ENCODE measurements at regions of chr16 and their contacts with region 1.

Region 1: GRCh38 chr16:74862741-74863244 is 88.2 kb upstream of the FA2H start:
- DNase-seq: no peak
- ATAC-seq: peak; percentile 27; the same call in 1 of the 2 replicates
- H3K4me3 Mint-ChIP-seq: no peak overlapping the region
- H3K27ac Mint-ChIP-seq: peak overlapping the region; percentile 77; the same call in 1 of the 2 replicates
- H3K4me1 Mint-ChIP-seq: peaks cover 43% of the 10 kb centered on the region
- H3K27me3 Mint-ChIP-seq: no peaks in the 10 kb centered on the region
- CTCF ChIP-seq: peak; percentile 70

Region 2: GRCh38 chr16:74709441-74709877 is 153.3 kb before region 1 on chr16:
- CTCF ChIA-PET with region 1: interaction called, 62 read pairs
- POLR2A ChIA-PET with region 1: interaction called, 7 read pairs
- DNase-seq: peak; percentile 87
- ATAC-seq: peak; percentile 89
- H3K4me3 Mint-ChIP-seq: no peak overlapping the region
- H3K27ac Mint-ChIP-seq: no peak overlapping the region
- H3K4me1 Mint-ChIP-seq: peaks cover 8% of the 10 kb centered on the region
- H3K27me3 Mint-ChIP-seq: no peaks in the 10 kb centered on the region
- CTCF ChIP-seq: peak; percentile 90

Region 3: GRCh38 chr16:74738134-74738541 is 124.7 kb before region 1 on chr16:
- CTCF ChIA-PET with region 1: interaction called, 11 read pairs
- POLR2A ChIA-PET with region 1: interaction called, 3 read pairs
- DNase-seq: no peak
- ATAC-seq: no peak
- H3K4me3 Mint-ChIP-seq: no peak overlapping the region
- H3K27ac Mint-ChIP-seq: no peak overlapping the region
- H3K4me1 Mint-ChIP-seq: peaks cover 49% of the 10 kb centered on the region
- H3K27me3 Mint-ChIP-seq: no peaks in the 10 kb centered on the region
- CTCF ChIP-seq: no peak

Region 4: GRCh38 chr16:74774203-74775116 is 88.3 kb before region 1 on chr16 and contains the start of gene FA2H:
- CTCF ChIA-PET with region 1: interaction called, 31 read pairs
- POLR2A ChIA-PET with region 1: no interaction called
- DNase-seq: peak; percentile 88
- ATAC-seq: peak; percentile 94
- H3K4me3 Mint-ChIP-seq: peak within 1 kb of the TSS; percentile 84
- H3K27ac Mint-ChIP-seq: peak within 1 kb of the TSS; percentile 80; the same call in 1 of the 2 replicates
- H3K4me1 Mint-ChIP-seq: peaks cover 16% of the 10 kb centered on the region
- H3K27me3 Mint-ChIP-seq: peaks cover 31% of the 10 kb centered on the region
- CTCF ChIP-seq: no peak
- total RNA-seq, gene FA2H: 6.0 to 10.9 TPM (median 6.6 TPM) in 3 replicates

Region 5: DNA sequence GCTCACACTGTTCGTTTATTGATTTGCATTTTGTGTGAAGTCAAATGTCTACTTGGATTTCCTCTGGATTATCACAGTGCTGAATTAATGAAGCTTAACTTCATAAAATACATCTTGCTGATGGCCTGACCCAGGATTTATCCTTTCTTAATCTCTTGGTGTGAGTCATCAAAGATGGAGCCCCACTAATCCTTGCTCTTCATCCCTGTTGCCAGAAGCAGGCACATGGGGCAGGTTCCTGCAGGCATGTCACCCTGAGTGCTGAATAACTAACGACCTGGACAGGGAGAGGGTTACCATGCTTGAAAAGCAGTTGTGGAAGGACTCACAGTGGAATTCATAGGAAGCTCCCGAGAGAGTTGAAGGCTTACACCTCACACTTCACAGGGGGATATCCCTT is 32.1 kb before region 1 on chr16:
- CTCF ChIA-PET with region 1: interaction called, 22 read pairs
- POLR2A ChIA-PET with region 1: no interaction called
- DNase-seq: no peak
- ATAC-seq: no peak
- H3K4me3 Mint-ChIP-seq: no peak overlapping the region
- H3K27ac Mint-ChIP-seq: no peak overlapping the region
- H3K4me1 Mint-ChIP-seq: peaks cover 6% of the 10 kb centered on the region; the same call in 1 of the 2 replicates
- H3K27me3 Mint-ChIP-seq: no peaks in the 10 kb centered on the region; the same call in 1 of the 2 replicates
- CTCF ChIP-seq: no peak

Region 6: DNA sequence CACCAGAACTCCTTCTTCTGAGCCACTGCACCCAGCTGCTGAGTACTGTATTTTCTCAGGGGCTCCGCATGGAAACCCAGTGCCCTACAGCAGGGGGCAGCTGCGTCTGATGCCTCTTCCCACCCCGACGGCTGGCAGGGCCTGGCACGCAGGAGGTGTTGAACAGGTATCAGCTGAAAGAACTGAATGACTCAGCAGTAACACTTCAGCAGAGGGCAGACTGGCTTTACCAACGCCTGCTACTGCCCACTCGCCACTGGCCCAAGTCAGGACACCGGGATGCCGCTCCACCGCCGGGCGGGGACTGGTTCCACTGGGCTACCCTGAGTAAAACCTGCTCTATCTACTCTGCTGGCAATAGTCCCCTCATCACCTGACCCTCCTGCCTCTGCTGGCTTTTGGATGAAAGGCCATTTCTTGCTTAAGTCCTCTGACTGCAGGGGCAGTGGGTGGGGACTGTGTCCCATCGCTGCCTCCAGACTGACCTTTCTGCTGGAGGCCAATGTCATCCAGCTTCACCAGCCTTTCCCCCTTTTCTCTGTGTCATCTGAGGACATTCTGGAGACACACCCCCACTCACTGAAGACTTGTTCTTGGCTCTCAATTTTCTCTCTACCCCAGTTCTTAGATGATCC is 12.2 kb after region 1 on chr16:
- CTCF ChIA-PET with region 1: interaction called, 38 read pairs
- POLR2A ChIA-PET with region 1: no interaction called
- DNase-seq: no peak
- ATAC-seq: no peak
- H3K4me3 Mint-ChIP-seq: no peak overlapping the region
- H3K27ac Mint-ChIP-seq: peak overlapping the region; percentile 57; the same call in 1 of the 2 replicates
- H3K4me1 Mint-ChIP-seq: peaks cover 30% of the 10 kb centered on the region
- H3K27me3 Mint-ChIP-seq: no peaks in the 10 kb centered on the region
- CTCF ChIP-seq: no peak